Activated CD8-positive, alpha-beta memory T cell treated with anti-CD3 and anti-CD28 coated beads, Interleukin-2, amount 10 ng/mL, durations not matched to agents 7 days and 5 days (primary cell): ENCODE measurements at regions of chr16 and their contacts with region 1.

Region 1: DNA sequence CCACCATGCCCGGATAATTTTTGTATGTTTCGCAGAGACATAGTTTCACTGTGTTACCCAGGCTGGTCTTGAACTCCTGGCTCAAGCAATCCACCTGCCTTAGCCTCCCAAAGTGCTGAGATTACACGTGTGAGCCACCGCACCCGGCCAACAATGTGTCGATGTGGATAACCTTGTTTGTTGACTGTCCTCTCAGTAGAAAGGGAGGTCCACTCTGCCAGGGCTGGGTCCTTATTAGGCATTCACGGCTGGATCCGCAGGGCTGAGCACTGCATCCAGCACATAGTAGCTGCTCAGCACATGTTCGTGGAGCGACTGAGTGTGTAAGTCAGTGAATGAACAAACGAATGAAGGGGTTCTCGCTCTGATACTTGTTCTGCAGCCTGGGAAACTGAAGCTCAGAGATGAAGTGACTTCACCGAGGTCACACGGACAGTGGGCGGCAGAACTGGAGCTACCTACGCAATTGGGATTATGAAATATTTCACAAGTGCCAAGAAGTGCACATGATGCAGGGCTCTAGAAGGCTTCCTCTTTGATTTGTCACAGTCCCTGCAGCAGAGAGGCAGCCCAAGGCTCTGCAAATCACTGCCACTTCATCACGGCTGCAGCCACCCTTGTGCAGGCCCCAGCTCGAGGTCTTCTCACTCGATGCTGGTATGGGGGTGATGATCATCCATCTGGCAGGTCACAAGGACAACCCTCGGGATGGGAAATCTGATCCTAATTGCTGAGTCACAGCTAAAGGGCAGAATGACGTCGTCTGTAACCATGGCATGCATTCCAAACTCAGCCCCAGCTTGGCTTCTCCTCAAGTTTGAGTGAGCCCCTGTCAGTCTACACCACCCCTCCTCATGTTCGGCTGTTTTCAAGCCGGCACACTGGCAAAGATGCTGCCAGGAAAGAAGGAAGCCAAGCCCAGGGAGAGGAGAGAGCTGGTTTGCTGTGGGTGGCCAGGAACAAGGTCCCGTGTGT is 28.0 kb upstream of the SNN start:
- DNase-seq: no peak
- ATAC-seq: no peak
- H3K4me3 Mint-ChIP-seq: no peak overlapping the region
- H3K27ac Mint-ChIP-seq: no peak overlapping the region
- H3K4me1 Mint-ChIP-seq: peaks cover 2% of the 10 kb centered on the region
- H3K27me3 Mint-ChIP-seq: peaks cover 4% of the 10 kb centered on the region

Region 2: DNA sequence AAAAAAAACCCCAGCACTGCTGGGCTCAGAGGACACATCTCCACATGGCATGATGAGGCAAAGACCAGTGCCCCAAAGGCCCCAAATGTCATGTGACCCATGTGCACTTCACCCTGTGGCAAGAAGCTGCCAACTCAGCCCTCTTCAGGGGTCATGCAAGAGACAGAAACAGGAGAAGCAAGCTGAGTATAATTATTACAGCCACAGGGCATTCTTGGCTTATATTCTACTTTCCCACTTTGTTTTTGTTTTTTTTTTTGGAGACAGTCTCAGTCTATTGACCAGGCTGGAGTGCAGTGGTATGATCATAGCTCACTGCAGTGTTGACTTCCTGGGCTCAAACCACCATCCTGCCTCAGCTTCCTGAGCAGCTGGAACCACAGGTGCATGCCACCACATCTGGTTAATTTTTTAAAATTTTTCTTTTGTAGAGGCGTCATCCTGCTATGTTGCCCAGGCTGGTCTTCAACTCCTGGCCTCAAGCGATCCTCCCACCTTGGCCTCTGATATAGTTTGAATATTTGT is 20.8 kb before region 1 on chr16:
- CTCF ChIA-PET with region 1: interaction called, 11 read pairs
- DNase-seq: peak; percentile 85
- ATAC-seq: peak; percentile 66
- H3K4me3 Mint-ChIP-seq: peak overlapping the region; percentile 39
- H3K27ac Mint-ChIP-seq: peak overlapping the region; percentile 91
- H3K4me1 Mint-ChIP-seq: peaks cover 51% of the 10 kb centered on the region
- H3K27me3 Mint-ChIP-seq: no peaks in the 10 kb centered on the region